MCF 10A (cell line): ENCODE measurements at regions of chr3 and their contacts with region 1.

Region 1: DNA sequence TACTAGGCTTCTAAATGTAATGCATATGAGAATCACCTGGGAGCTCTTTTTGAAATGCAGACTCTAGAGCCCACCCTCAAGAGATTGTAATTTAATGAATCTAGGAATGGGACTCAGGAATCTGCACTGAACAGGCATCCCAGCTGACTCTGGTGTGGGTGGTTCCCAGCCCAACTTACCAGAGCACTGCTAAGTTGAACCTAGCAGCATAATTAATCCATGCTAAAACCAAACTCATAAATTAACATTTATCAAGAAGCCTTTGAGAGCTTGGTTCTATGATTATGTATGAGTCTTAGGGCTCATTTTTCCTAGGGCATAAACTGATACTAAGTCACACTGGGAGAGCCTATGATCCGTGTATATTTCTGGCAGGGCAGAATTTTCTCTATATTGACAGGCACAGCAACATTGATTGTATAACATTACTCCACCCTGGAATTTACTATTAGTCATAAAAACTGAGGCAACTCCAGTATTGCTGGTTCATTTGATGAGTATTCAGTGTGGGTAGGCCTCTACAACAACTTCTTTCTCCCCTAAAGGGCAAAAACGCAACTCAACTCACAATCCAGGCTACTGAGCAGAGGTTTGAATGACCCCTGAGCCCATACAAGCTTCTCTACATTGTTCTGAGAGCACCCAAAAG is 10.7 kb upstream of the CSTA start:
- DNase-seq: peak; percentile 61
- H3K4me3 Mint-ChIP-seq: no peak overlapping the region
- H3K27ac Mint-ChIP-seq: peak overlapping the region; percentile 78
- H3K4me1 Mint-ChIP-seq: peaks cover 19% of the 10 kb centered on the region
- H3K27me3 Mint-ChIP-seq: no peaks in the 10 kb centered on the region
- CTCF ChIP-seq: no peak

Region 2: GRCh38 chr3:122356415-122356814 is 42.1 kb after region 1 on chr3:
- CTCF ChIA-PET with region 1: interaction called, 12 read pairs
- POLR2A ChIA-PET with region 1: interaction called, 89 read pairs
- intact Hi-C with region 1: no loop called
- DNase-seq: peak; percentile 81
- H3K4me3 Mint-ChIP-seq: no peak overlapping the region
- H3K27ac Mint-ChIP-seq: no peak overlapping the region
- H3K4me1 Mint-ChIP-seq: peaks cover 26% of the 10 kb centered on the region
- H3K27me3 Mint-ChIP-seq: no peaks in the 10 kb centered on the region
- CTCF ChIP-seq: peak; percentile 50

Region 3: DNA sequence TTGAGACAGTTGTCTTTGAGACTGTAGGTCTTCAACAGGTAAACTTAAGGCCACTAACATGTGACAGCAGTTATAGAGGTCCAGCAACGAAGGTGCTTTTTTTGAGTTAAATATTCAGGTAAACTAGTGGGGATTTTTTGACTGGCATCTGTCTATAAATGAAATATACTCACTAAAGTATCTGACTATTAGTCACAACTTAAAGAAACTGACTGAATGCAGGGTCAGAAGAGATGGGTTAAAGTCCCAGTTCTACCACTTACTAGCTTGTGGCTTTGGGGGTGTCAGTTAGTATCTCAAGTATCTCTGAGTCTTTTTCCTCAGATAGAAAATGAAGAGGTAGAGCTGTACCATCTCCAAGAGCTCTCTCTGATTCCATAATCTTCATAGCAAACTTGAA is 50.7 kb after region 1 on chr3:
- CTCF ChIA-PET with region 1: interaction called, 4 read pairs
- POLR2A ChIA-PET with region 1: interaction called, 11 read pairs
- intact Hi-C with region 1: no loop called
- DNase-seq: no peak
- H3K4me3 Mint-ChIP-seq: no peak overlapping the region
- H3K27ac Mint-ChIP-seq: no peak overlapping the region
- H3K4me1 Mint-ChIP-seq: no peaks in the 10 kb centered on the region
- H3K27me3 Mint-ChIP-seq: no peaks in the 10 kb centered on the region
- CTCF ChIP-seq: no peak

Region 4: DNA sequence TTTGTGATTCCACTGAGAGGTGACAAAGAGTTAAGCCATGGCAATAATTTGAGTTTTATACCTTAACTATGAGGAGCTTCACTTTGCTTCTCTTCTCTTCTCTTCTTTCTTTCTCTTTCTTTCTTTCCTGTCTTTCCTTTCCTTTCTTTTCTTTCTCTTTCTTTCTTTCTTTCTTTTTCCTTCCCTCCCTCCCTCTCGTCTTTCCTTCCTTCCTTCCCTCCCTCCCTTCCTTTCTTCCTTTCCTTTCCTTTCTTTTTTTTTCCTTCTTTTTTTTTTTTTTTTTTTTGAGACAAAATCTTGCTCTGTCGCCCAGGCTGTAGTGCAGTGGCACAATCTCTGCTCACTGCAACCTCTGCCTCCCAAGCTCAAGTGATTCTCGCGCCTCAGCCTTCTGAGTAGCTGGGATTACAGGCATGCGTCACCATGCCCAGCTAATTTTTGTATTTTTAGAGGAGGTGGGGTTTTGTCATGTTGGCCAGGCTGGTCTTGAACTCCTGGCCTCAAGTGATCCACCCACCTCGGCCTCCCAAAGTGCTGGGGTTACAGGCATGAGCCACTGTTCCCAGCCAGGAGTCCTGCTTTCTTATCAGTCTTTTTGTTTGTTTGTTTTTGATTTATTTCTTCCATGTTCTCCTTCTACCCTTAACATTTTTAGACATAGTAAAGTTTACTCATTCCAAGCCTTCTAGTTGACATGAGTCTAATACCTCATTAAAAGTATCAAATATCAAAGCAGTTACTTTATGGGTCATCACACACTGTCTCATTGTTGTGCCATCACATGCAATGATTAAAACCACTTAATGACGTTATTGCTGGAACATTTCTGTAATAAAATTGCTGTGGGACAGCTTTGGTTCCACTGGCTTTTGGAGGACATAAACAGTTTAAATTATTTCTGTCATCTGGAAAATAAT is 510.4 kb after region 1 on chr3:
- CTCF ChIA-PET with region 1: no interaction called
- POLR2A ChIA-PET with region 1: no interaction called
- intact Hi-C with region 1: no loop called
- DNase-seq: no peak
- H3K4me3 Mint-ChIP-seq: no peak overlapping the region
- H3K27ac Mint-ChIP-seq: no peak overlapping the region
- H3K4me1 Mint-ChIP-seq: peaks cover 5% of the 10 kb centered on the region
- H3K27me3 Mint-ChIP-seq: no peaks in the 10 kb centered on the region
- CTCF ChIP-seq: no peak